ENCODE measurements at regions of chr11 and their contacts with region 1.

Region 1: GRCh38 chr11:122578168-122578825 is 77.2 kb upstream of the UBASH3B start:
- DNase-seq: no peak
- H3K4me3 ChIP-seq: no peak overlapping the region
- H3K27me3 ChIP-seq: no peaks in the 10 kb centered on the region
- CTCF ChIP-seq: peak; percentile 37; the same call in 1 of the 2 replicates

Region 2: DNA sequence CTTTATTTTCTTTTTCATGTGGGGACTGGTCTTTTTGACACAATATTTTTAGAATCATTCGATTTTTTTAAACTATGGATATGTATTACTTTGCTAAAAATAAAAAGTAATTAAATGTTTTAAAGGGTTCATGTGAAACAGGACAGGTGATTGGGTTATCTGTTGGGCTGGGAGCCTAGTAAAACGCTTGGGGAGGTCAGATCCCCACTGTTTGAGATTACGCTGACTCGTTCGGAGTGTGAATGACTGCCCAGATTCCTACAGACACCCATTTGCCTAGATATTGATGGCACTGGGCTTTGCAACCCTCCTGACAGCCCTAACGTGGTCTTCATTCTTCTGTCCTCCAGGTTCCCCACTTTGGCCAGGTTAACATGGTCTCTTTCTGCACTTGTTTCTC is 14.3 kb after region 1 on chr11:
- CTCF ChIA-PET with region 1: interaction called, 49 read pairs
- POLR2A ChIA-PET with region 1: no interaction called
- DNase-seq: no peak
- H3K4me3 ChIP-seq: no peak overlapping the region
- H3K27me3 ChIP-seq: peaks cover 4% of the 10 kb centered on the region
- CTCF ChIP-seq: no peak

Region 3: GRCh38 chr11:122601141-122602125 is 23.1 kb after region 1 on chr11:
- CTCF ChIA-PET with region 1: interaction called, 49 read pairs
- POLR2A ChIA-PET with region 1: no interaction called
- DNase-seq: peak; percentile 65
- H3K4me3 ChIP-seq: no peak overlapping the region
- H3K27me3 ChIP-seq: peaks cover 3% of the 10 kb centered on the region
- CTCF ChIP-seq: no peak

Region 4: DNA sequence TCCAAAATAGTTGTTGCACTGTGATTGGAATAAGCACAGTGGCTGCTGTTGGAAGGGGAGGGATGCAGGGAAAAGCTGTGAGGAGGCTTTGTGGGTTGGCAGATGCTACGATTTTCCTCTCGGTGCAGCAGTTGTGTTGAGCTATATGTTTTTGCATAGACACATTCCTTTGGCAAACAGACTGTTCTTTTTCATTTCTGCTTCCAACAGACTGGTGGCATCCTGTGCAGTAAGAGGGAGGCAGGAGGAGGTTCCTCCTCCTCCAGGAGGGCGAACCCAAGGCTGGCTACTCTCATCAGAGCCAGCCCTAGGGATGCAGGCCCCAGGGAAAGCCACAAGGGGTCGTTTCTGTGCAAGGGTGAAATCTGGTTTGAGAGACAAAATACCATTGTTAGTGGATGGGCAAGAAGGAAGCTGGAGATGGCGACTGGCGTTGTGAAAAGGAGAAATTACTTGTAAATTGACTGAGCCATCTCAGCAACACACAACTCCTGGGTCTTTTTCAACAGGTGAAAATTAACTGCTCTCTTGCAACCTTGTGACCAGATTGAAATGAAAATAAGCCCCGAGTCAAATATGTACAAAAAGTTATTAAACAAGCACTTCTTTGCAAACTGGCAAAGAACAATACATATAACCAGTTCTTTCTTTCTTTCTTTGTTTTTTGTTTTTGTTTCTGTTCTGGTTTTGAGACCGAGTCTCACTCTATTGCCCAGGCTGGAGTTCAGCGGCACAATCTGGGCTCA is 50.7 kb after region 1 on chr11:
- CTCF ChIA-PET with region 1: interaction called, 24 read pairs
- POLR2A ChIA-PET with region 1: no interaction called
- DNase-seq: no peak
- H3K4me3 ChIP-seq: no peak overlapping the region
- H3K27me3 ChIP-seq: peaks cover 5% of the 10 kb centered on the region
- CTCF ChIP-seq: peak; percentile 93

Region 5: GRCh38 chr11:122671400-122671891 is 93.1 kb after region 1 on chr11:
- CTCF ChIA-PET with region 1: no interaction called
- POLR2A ChIA-PET with region 1: no interaction called
- DNase-seq: no peak
- H3K4me3 ChIP-seq: no peak overlapping the region
- H3K27me3 ChIP-seq: no peaks in the 10 kb centered on the region
- CTCF ChIP-seq: no peak

Region 6: DNA sequence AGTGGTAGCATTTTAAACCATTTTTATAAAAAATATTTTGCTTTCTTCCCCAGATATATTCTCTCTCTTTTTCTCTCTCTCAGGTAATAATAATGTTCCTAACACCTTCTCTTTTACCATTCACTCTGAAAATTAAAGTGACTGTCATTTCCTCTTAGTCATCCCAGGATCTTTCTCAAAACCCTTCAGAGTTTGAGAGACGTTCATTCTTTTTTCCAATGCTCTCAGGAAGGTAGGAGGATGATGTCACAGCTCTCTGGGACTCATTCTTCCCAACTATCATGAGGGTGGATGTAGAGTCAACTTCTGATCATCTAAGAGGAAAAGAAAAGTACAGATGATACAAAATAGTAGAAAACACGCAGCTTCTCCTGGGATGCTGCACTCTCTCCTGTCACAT is 199.9 kb after region 1 on chr11:
- CTCF ChIA-PET with region 1: no interaction called
- POLR2A ChIA-PET with region 1: no interaction called
- DNase-seq: no peak
- H3K4me3 ChIP-seq: no peak overlapping the region
- H3K27me3 ChIP-seq: no peaks in the 10 kb centered on the region
- CTCF ChIP-seq: no peak